ENCODE measurements at regions of chr1 and their contacts with region 1.

Region 1: GRCh38 chr1:68120136-68120791 is 69.8 kb upstream of the DIRAS3 start:
- DNase-seq: peak; percentile 68 to 70
- H3K4me3 ChIP-seq: no peak overlapping the region
- H3K4me1 ChIP-seq: no peaks in the 10 kb centered on the region
- H3K27me3 ChIP-seq: no peaks in the 10 kb centered on the region

Region 2: DNA sequence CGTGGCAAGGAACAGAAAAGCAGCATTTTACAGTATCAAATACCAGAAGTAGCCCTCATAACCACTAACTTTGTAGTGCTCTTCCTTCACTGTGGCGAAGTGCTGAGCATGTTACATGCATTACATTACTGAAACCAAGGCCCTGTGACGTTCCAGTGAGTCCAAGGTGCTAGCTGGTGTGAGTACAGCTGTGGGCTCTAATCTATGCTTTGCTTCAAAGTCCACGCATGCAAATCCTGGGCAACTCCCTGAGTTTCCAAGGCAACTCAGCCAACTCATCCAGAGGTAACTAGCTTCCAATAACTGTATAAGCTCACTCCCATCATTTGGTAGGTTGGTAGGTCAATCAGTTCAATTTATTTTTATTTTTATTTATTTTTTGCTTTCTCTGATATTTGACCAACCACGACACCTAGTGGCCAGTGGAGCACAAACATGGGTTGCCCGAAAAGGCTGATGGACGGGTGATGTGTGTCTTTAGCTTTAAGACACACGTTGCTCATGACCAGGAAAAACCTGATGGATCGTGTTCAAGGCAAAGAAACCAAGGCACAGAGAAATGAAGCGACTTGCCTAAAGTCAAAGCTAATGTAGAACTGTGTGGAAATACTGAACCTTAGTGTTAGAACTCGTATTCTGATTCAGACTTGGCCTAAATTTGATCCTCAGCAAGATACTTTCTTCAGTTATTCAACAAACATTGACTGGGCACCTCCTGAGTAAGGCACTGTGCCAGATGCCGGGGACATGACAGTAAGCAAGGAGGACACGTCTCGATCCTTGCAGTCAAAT is 360.0 kb before region 1 on chr1:
- in situ Hi-C with region 1: loop called (anchors 10 kb)
- DNase-seq: peak; percentile 38 to 72
- H3K4me3 ChIP-seq: no peak overlapping the region
- H3K4me1 ChIP-seq: no peaks in the 10 kb centered on the region
- H3K27me3 ChIP-seq: no peaks in the 10 kb centered on the region

Region 3: GRCh38 chr1:68344208-68344607 is 223.9 kb after region 1 on chr1:
- in situ Hi-C with region 1: loop called (anchors 5 kb)
- DNase-seq: no peak
- H3K4me3 ChIP-seq: no peak overlapping the region
- H3K4me1 ChIP-seq: no peaks in the 10 kb centered on the region
- H3K27me3 ChIP-seq: no peaks in the 10 kb centered on the region

Region 4: DNA sequence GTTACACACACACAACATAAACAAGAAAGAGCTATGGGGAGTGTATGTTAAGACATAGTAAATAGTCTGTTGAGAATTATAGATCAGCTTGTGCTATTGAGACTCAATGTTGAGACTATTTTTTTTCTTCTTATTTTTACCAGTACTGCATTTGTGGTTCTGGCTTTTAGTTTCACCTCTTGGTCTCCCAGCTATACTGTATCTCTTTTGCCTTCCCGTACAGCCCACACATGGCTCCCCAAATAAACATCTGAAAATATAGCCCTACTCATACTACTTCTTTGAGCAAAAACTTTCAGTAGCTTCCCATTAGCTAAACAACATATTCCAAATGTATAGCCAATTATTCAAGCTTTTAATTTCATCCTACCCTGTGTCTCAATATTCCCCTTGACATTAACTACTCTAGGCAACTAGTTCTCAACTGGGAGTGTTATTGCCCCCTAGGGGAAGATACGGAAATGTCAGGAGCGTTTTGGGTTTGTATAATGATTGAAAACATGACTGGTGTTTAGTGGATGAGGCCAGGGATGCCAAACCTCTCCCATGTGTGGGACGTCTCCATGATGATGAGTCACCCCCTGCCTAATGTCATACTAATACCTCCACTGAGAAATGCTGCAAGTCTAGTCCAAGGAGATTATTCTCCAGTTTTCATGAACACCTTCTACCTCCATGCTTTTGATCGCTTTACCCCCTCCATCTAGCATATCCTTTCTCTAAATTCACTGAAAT is 322.7 kb after region 1 on chr1:
- in situ Hi-C with region 1: loop called (anchors 10 kb)
- DNase-seq: peak; percentile 44 to 67
- H3K4me3 ChIP-seq: no peak overlapping the region
- H3K4me1 ChIP-seq: peaks cover 9% of the 10 kb centered on the region
- H3K27me3 ChIP-seq: no peaks in the 10 kb centered on the region